Activated B cell treated with CpG ODN at 0.5 μM for 24 hours (primary cell): ENCODE measurements at regions of chr18 and their contacts with region 1.

Region 1: DNA sequence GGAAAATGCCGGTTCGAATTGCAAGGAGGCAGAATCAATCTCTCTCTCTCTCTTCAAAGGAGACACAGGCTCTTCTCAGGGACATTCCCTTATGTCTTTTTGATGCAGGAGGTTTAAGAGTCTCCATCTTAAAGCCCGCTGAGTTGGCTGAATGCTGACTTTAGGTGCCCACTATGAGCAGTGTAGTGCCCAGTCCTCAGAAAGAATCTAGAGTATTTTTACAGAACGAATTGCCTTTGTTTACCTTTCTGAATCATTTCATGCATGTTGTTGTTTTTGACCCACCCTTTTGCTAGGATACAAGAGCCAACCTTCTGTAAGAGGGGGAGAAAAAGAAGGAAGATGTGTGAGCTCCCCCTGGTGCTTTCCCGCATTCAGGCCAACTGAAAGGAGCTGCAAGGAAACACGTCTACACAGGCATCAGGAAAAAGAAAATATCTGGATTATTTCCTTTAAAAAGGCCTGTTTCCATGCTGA is 193.5 kb upstream of the TCF4 start:
- DNase-seq: no peak
- ATAC-seq: no peak
- H3K4me3 Mint-ChIP-seq: peak overlapping the region; percentile 87
- H3K27ac Mint-ChIP-seq: peak overlapping the region; percentile 97
- H3K4me1 Mint-ChIP-seq: peaks cover 33% of the 10 kb centered on the region
- H3K27me3 Mint-ChIP-seq: peaks cover 6% of the 10 kb centered on the region
- CTCF ChIP-seq: no peak

Region 2: DNA sequence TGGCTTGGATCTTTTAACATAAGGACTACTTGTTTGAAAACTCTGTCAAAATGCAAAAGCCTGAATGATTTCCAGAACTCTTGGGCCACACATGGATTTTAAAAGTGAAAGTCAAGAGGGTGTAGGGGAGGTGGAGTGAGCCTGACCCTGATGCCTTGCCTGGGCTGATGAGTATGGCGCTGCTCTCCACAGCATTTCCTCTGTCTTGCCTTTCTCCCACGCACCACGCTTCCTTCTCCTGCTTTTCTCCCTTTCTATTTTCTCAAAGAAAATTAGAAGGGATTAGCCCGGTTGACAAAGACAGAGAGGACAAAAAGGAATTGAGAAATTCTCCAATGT is 615.3 kb before region 1 on chr18:
- CTCF ChIA-PET with region 1: no interaction called
- POLR2A ChIA-PET with region 1: no interaction called
- intact Hi-C with region 1: no loop called
- DNase-seq: no peak
- ATAC-seq: no peak
- H3K4me3 Mint-ChIP-seq: no peak overlapping the region
- H3K27ac Mint-ChIP-seq: no peak overlapping the region
- H3K4me1 Mint-ChIP-seq: no peaks in the 10 kb centered on the region
- H3K27me3 Mint-ChIP-seq: no peaks in the 10 kb centered on the region
- CTCF ChIP-seq: no peak

Region 3: DNA sequence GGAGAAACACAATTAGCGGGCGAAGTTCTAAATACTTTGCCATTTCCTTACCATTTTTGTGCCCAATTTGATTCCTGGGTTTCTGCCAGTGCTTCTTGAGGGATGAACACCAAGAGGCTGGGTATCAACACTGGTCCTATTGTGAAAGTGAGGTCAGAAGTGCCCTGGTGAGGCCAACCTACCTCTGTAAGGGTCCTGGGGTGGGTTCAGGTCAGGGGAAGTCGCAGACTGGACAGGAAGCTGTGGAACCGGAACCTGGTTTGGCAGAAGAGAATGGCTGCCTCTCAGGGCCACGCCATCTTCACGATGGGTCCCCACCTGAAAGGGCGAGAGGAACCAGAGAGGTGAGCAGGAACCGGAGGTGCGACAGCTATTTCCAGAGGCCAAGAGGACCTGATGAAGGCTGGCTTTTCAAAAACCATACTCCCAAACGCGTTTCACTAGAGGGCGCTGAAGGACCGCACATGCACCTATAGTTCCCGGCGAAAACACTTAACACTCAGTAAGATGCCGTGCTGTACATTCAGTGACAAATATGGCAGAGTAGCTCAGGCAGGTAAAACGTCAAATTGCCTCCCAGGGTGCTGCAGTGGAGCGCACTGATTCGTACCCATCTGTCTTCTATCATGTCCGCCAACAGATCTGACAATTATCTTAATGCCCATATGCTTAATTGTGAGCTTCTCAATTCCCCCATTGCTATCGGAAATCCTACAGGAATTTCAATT is 547.0 kb before region 1 on chr18:
- CTCF ChIA-PET with region 1: interaction called, 4 read pairs
- POLR2A ChIA-PET with region 1: interaction called, 7 read pairs
- intact Hi-C with region 1: loop called (anchors 5 kb)
- DNase-seq: peak; percentile 57
- ATAC-seq: peak; percentile 77
- H3K4me3 Mint-ChIP-seq: no peak overlapping the region
- H3K27ac Mint-ChIP-seq: peak overlapping the region; percentile 76
- H3K4me1 Mint-ChIP-seq: peaks cover 45% of the 10 kb centered on the region
- H3K27me3 Mint-ChIP-seq: no peaks in the 10 kb centered on the region
- CTCF ChIP-seq: peak; percentile 63

Region 4: GRCh38 chr18:55415258-55415871 is 366.2 kb before region 1 on chr18:
- CTCF ChIA-PET with region 1: interaction called, 9 read pairs
- POLR2A ChIA-PET with region 1: interaction called, 10 read pairs
- intact Hi-C with region 1: loop called (anchors 1 kb)
- DNase-seq: peak; percentile 74
- ATAC-seq: peak; percentile 92
- H3K4me3 Mint-ChIP-seq: no peak overlapping the region
- H3K27ac Mint-ChIP-seq: peak overlapping the region; percentile 53
- H3K4me1 Mint-ChIP-seq: peaks cover 36% of the 10 kb centered on the region
- H3K27me3 Mint-ChIP-seq: no peaks in the 10 kb centered on the region
- CTCF ChIP-seq: peak; percentile 96

Region 5: GRCh38 chr18:55589625-55590291 is 191.8 kb before region 1 on chr18:
- CTCF ChIA-PET with region 1: no interaction called
- POLR2A ChIA-PET with region 1: interaction called, 23 read pairs
- intact Hi-C with region 1: loop called (anchors 1 kb)
- DNase-seq: peak; percentile 84
- ATAC-seq: peak; percentile 86
- H3K4me3 Mint-ChIP-seq: peak overlapping the region; percentile 89
- H3K27ac Mint-ChIP-seq: peak overlapping the region; percentile 89
- H3K4me1 Mint-ChIP-seq: peaks cover 38% of the 10 kb centered on the region
- H3K27me3 Mint-ChIP-seq: peaks cover 4% of the 10 kb centered on the region
- CTCF ChIP-seq: no peak

Region 6: GRCh38 chr18:55811925-55812324 is 30.4 kb after region 1 on chr18:
- CTCF ChIA-PET with region 1: no interaction called
- POLR2A ChIA-PET with region 1: no interaction called
- intact Hi-C with region 1: no loop called
- DNase-seq: no peak
- ATAC-seq: no peak
- H3K4me3 Mint-ChIP-seq: no peak overlapping the region
- H3K27ac Mint-ChIP-seq: no peak overlapping the region
- H3K4me1 Mint-ChIP-seq: no peaks in the 10 kb centered on the region
- H3K27me3 Mint-ChIP-seq: peaks cover 3% of the 10 kb centered on the region
- CTCF ChIP-seq: no peak

Region 7: GRCh38 chr18:55897091-55897689 is 115.7 kb after region 1 on chr18:
- CTCF ChIA-PET with region 1: no interaction called
- POLR2A ChIA-PET with region 1: no interaction called
- intact Hi-C with region 1: no loop called
- DNase-seq: no peak
- ATAC-seq: no peak
- H3K4me3 Mint-ChIP-seq: no peak overlapping the region
- H3K27ac Mint-ChIP-seq: no peak overlapping the region
- H3K4me1 Mint-ChIP-seq: no peaks in the 10 kb centered on the region
- H3K27me3 Mint-ChIP-seq: no peaks in the 10 kb centered on the region
- CTCF ChIP-seq: no peak

Region 8: GRCh38 chr18:56112013-56112749 is 330.7 kb after region 1 on chr18:
- CTCF ChIA-PET with region 1: no interaction called
- POLR2A ChIA-PET with region 1: no interaction called
- intact Hi-C with region 1: loop called (anchors 5 kb)
- DNase-seq: no peak
- ATAC-seq: peak; percentile 92
- H3K4me3 Mint-ChIP-seq: peak overlapping the region; percentile 64
- H3K27ac Mint-ChIP-seq: peak overlapping the region; percentile 72
- H3K4me1 Mint-ChIP-seq: peaks cover 50% of the 10 kb centered on the region
- H3K27me3 Mint-ChIP-seq: no peaks in the 10 kb centered on the region
- CTCF ChIP-seq: no peak

Region 9: GRCh38 chr18:56314396-56314795 is 532.9 kb after region 1 on chr18:
- CTCF ChIA-PET with region 1: interaction called, 3 read pairs
- POLR2A ChIA-PET with region 1: no interaction called
- intact Hi-C with region 1: loop called (anchors 5 kb)
- DNase-seq: no peak
- ATAC-seq: peak; percentile 47
- H3K4me3 Mint-ChIP-seq: no peak overlapping the region
- H3K27ac Mint-ChIP-seq: no peak overlapping the region
- H3K4me1 Mint-ChIP-seq: peaks cover 23% of the 10 kb centered on the region
- H3K27me3 Mint-ChIP-seq: no peaks in the 10 kb centered on the region
- CTCF ChIP-seq: no peak